ENCODE measurements at regions of chr1 and their contacts with region 1.

Region 1: GRCh38 chr1:33876970-33877650 is 13.2 kb downstream of the HMGB4 start:
- DNase-seq: peak in 8 of 10 donors; percentile 45 to 95 (median 74)

Region 2: DNA sequence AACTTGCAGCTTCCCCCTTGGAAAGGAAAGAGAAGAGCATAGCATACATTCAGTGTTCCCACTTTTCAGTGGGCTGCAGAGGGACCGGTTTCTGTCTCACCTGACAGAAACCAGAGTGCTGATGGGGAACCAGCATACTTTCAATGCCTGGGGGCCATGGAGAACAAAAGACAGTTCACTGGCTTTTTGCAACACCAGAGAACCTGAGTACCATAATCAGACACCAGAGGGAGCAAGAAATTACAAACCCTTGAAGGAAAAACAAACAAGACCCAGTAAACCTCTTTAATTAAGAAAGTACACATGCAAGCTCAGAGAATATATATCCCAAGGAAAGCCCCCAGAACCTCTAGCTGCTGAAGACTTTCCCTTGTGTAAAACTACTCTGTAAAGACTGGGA is 236.8 kb after region 1 on chr1:
- intact Hi-C with region 1: loop called (anchors 5 kb)
- DNase-seq: no peak

Region 3: GRCh38 chr1:34320053-34320669 is 443.1 kb after region 1 on chr1:
- intact Hi-C with region 1: no loop called
- DNase-seq: no peak

Measured in posterior cingulate gyrus (tissue), 11 donors.